ENCODE measurements at regions of chr2 and their contacts with region 1.

Region 1: GRCh38 chr2:179239195-179239594 is 25.4 kb downstream of the SESTD1 start:
- DNase-seq: peak in 1 of 9 experiments; percentile 51
- ATAC-seq: peak; percentile 58
- H3K4me3 ChIP-seq: no peak overlapping the region
- H3K4me3 Mint-ChIP-seq: no peak overlapping the region
- H3K27ac ChIP-seq: no peak overlapping the region
- H3K27ac Mint-ChIP-seq: no peak overlapping the region
- H3K4me1 ChIP-seq: peaks cover 7% of the 10 kb centered on the region
- H3K4me1 Mint-ChIP-seq: peaks cover 20% of the 10 kb centered on the region
- H3K27me3 ChIP-seq: no peaks in the 10 kb centered on the region
- H3K27me3 Mint-ChIP-seq: peaks cover 2% of the 10 kb centered on the region
- CTCF ChIP-seq: no peak

Region 2: GRCh38 chr2:178949584-178949983 is 289.6 kb before region 1 on chr2:
- CTCF ChIA-PET with region 1: no interaction called
- POLR2A ChIA-PET with region 1: no interaction called
- intact Hi-C with region 1: no loop called
- DNase-seq: no peak
- ATAC-seq: no peak
- H3K4me3 ChIP-seq: no peak overlapping the region
- H3K4me3 Mint-ChIP-seq: no peak overlapping the region
- H3K27ac ChIP-seq: no peak overlapping the region
- H3K27ac Mint-ChIP-seq: no peak overlapping the region
- H3K4me1 ChIP-seq: no peaks in the 10 kb centered on the region
- H3K4me1 Mint-ChIP-seq: peaks cover 4% of the 10 kb centered on the region
- H3K27me3 ChIP-seq: no peaks in the 10 kb centered on the region
- H3K27me3 Mint-ChIP-seq: no peaks in the 10 kb centered on the region
- CTCF ChIP-seq: no peak

Region 3: DNA sequence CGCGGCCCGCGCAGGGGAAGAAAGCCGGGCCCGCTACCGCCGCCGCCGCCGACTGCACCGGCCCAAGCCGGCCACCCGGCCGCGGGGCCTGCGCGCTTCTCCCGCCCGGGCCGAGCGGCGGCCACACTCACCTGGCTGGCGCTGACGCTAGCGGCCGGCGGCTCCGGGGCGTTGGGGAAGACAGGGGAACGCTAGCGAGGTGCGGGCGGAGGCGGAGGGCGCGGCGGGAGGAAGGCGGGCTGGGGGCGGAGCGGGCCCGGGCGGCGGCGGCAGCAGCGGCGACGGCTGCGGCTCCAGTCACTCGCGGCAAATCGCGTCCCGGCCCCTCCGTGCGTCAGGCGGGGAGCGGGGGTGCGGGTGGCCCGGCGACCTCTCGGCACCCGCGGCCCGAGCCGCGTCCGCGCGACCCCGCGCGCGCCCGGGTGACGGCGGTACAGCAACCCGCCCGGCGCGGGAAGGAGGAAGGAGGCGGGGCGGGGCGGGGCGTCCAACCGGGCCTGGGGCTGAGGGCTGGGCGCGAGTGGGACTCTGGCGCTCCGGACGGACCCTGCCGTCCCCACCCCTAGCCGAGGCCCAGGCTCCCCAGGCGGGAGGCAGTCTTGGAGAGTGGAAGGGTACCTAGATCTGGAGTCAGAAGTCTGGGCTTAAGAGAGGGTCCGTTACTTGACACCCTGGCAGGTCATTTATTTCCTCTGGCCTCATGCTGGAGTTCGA is 25.3 kb after region 1 on chr2 and contains the start of gene SESTD1:
- CTCF ChIA-PET with region 1: no interaction called
- POLR2A ChIA-PET with region 1: no interaction called
- intact Hi-C with region 1: loop called in 1 of 2 experiments (anchors 2 kb)
- DNase-seq: peak in 8 of 9 experiments; percentile 20 to 71 (median 44)
- ATAC-seq: peak; percentile 79
- H3K4me3 ChIP-seq: peak within 1 kb of the TSS; percentile 47 to 61
- H3K4me3 Mint-ChIP-seq: peak within 1 kb of the TSS; percentile 82
- H3K27ac ChIP-seq: no peak within 1 kb of the TSS
- H3K27ac Mint-ChIP-seq: no peak within 1 kb of the TSS
- H3K4me1 ChIP-seq: peaks cover 10% of the 10 kb centered on the region
- H3K4me1 Mint-ChIP-seq: peaks cover 16% of the 10 kb centered on the region
- H3K27me3 ChIP-seq: peaks cover 0 to 6% of the 10 kb centered on the region in 2 experiments
- H3K27me3 Mint-ChIP-seq: peaks cover 34% of the 10 kb centered on the region
- CTCF ChIP-seq: no peak
- total RNA-seq, gene SESTD1: 3.6 to 5.4 TPM

Measured in CD8-positive, alpha-beta T cell (primary cell).